Caco-2 (cell line): ENCODE measurements at regions of chr1 and their contacts with region 1.

Region 1: GRCh38 chr1:80218112-80218511 is 1211.6 kb upstream of the ADGRL4 start:
- DNase-seq: peak in 1 of 2 experiments; percentile 32
- H3K4me3 ChIP-seq: no peak overlapping the region
- H3K4me3 Mint-ChIP-seq: no peak overlapping the region
- H3K27ac Mint-ChIP-seq: no peak overlapping the region
- H3K4me1 ChIP-seq: no peaks in the 10 kb centered on the region
- H3K4me1 Mint-ChIP-seq: no peaks in the 10 kb centered on the region
- H3K27me3 ChIP-seq: no peaks in the 10 kb centered on the region
- H3K27me3 Mint-ChIP-seq: no peaks in the 10 kb centered on the region
- CTCF ChIP-seq: peak; percentile 33 to 50

Region 2: DNA sequence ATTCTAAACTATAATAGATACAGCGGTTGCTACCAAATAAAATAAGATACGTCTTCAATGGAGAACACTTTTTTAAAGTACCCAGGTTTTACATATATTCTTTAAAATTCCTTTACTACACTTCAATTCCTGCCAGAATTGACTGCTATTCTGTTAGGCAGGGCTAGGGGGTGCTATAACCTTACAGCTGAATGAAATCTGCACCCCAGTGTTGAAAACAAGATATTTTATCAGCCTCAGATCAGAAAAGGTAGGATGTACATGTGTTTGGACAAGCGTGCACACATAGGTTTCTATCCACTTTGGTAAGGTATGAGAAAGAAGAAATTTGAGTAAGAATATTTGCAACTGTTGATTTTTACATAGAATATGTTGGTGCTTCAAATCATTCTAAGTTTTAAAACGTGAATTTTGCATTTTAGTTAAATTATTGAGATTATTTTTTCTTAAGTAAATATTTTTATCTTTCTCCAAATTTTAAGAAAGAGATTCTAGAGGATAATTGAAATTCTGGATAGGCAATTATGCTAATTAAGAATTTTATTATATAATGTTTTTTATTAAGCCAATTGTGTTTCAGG is 720.8 kb before region 1 on chr1:
- CTCF ChIA-PET with region 1: no interaction called
- POLR2A ChIA-PET with region 1: no interaction called
- intact Hi-C with region 1: loop called (anchors 5 kb)
- DNase-seq: peak in 1 of 2 experiments; percentile 48
- H3K4me3 ChIP-seq: no peak overlapping the region
- H3K4me3 Mint-ChIP-seq: no peak overlapping the region
- H3K27ac Mint-ChIP-seq: no peak overlapping the region
- H3K4me1 ChIP-seq: no peaks in the 10 kb centered on the region
- H3K4me1 Mint-ChIP-seq: no peaks in the 10 kb centered on the region
- H3K27me3 ChIP-seq: no peaks in the 10 kb centered on the region
- H3K27me3 Mint-ChIP-seq: no peaks in the 10 kb centered on the region
- CTCF ChIP-seq: peak; percentile 74 to 77

Region 3: GRCh38 chr1:80202118-80202517 is 16.0 kb before region 1 on chr1:
- CTCF ChIA-PET with region 1: no interaction called
- POLR2A ChIA-PET with region 1: no interaction called
- intact Hi-C with region 1: no loop called
- DNase-seq: no peak
- H3K4me3 ChIP-seq: no peak overlapping the region
- H3K4me3 Mint-ChIP-seq: no peak overlapping the region
- H3K27ac Mint-ChIP-seq: no peak overlapping the region
- H3K4me1 ChIP-seq: no peaks in the 10 kb centered on the region
- H3K4me1 Mint-ChIP-seq: no peaks in the 10 kb centered on the region
- H3K27me3 ChIP-seq: no peaks in the 10 kb centered on the region
- H3K27me3 Mint-ChIP-seq: no peaks in the 10 kb centered on the region
- CTCF ChIP-seq: no peak

Region 4: DNA sequence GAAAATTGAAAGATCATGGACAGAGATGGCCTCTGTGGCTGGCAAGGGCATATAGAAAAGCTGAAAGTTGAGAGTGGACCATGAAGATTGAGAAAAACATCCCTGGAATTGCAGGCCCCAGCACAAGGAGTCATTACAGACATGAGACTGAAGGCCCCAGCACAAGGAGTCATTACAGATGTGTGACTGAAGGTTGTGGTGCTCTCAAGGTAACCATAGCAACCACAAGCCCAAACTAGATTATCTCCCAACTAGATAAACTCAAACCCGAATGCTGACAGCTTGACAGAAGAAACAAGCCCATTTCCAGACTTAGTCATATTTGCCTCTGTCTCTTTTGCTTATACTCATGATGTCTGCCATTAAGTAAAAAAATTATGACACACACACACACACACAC is 40.5 kb after region 1 on chr1:
- CTCF ChIA-PET with region 1: no interaction called
- POLR2A ChIA-PET with region 1: no interaction called
- intact Hi-C with region 1: no loop called
- DNase-seq: no peak
- H3K4me3 ChIP-seq: no peak overlapping the region
- H3K4me3 Mint-ChIP-seq: no peak overlapping the region
- H3K27ac Mint-ChIP-seq: no peak overlapping the region
- H3K4me1 ChIP-seq: no peaks in the 10 kb centered on the region
- H3K4me1 Mint-ChIP-seq: no peaks in the 10 kb centered on the region
- H3K27me3 ChIP-seq: no peaks in the 10 kb centered on the region
- H3K27me3 Mint-ChIP-seq: no peaks in the 10 kb centered on the region
- CTCF ChIP-seq: no peak

Region 5: GRCh38 chr1:80769208-80769750 is 551.2 kb after region 1 on chr1:
- CTCF ChIA-PET with region 1: no interaction called
- POLR2A ChIA-PET with region 1: no interaction called
- intact Hi-C with region 1: loop called (anchors 5 kb)
- DNase-seq: no peak
- H3K4me3 ChIP-seq: no peak overlapping the region
- H3K4me3 Mint-ChIP-seq: no peak overlapping the region
- H3K27ac Mint-ChIP-seq: no peak overlapping the region
- H3K4me1 ChIP-seq: no peaks in the 10 kb centered on the region
- H3K4me1 Mint-ChIP-seq: no peaks in the 10 kb centered on the region
- H3K27me3 ChIP-seq: no peaks in the 10 kb centered on the region
- H3K27me3 Mint-ChIP-seq: no peaks in the 10 kb centered on the region
- CTCF ChIP-seq: no peak